A549 (cell line): ENCODE measurements at regions of chr14 and their contacts with region 1.

Region 1: GRCh38 chr14:94689218-94689984 is 77.2 kb downstream of the SERPINA3 start:
- DNase-seq: peak; percentile 38 to 70
- ATAC-seq: peak; percentile 92 to 99
- H3K4me3 ChIP-seq: peak overlapping the region; percentile 28; the same call in 1 of the 3 replicates
- H3K27ac ChIP-seq: peak overlapping the region; percentile 62 to 72; a peak in 5 of 6 replicates
- H3K4me1 ChIP-seq: 0 out of 3 replicates have a peak, but pooled peaks cover 3% of the 10 kb centered on the region
- CTCF ChIP-seq: peak; percentile 96
- EP300 ChIP-seq: no peak
- POLR2A ChIP-seq: no peak
- RAD21 ChIP-seq: peak; percentile 85 to 96

Region 2: GRCh38 chr14:93799989-93800921 is 889.1 kb before region 1 on chr14:
- CTCF ChIA-PET with region 1: no interaction called
- POLR2A ChIA-PET with region 1: no interaction called
- DNase-seq: no peak
- ATAC-seq: peak; percentile 47 to 60; a peak in 1 of 6 replicates
- H3K4me3 ChIP-seq: no peak overlapping the region
- H3K27ac ChIP-seq: no peak overlapping the region
- H3K4me1 ChIP-seq: no peaks in the 10 kb centered on the region
- CTCF ChIP-seq: no peak
- EP300 ChIP-seq: no peak
- POLR2A ChIP-seq: no peak
- RAD21 ChIP-seq: no peak

Region 3: GRCh38 chr14:94598814-94599652 is 90.4 kb before region 1 on chr14:
- CTCF ChIA-PET with region 1: interaction called, 14 read pairs
- POLR2A ChIA-PET with region 1: interaction called, 3 read pairs
- DNase-seq: peak; percentile 87 to 98
- ATAC-seq: peak; percentile 78 to 88
- H3K4me3 ChIP-seq: 0 out of 3 replicates have a peak overlapping the region, but pooled peaks have one; percentile 7
- H3K27ac ChIP-seq: peak overlapping the region; percentile 97 to 98
- H3K4me1 ChIP-seq: peaks cover 74% of the 10 kb centered on the region
- CTCF ChIP-seq: peak; percentile 23; the same call in 2 of the 3 replicates
- EP300 ChIP-seq: peak; percentile 86 to 93
- POLR2A ChIP-seq: no peak
- RAD21 ChIP-seq: peak; percentile 28 to 50; a peak in 4 of 5 replicates

Region 4: GRCh38 chr14:94748667-94749347 is 59.4 kb after region 1 on chr14:
- CTCF ChIA-PET with region 1: interaction called, 22 read pairs
- POLR2A ChIA-PET with region 1: no interaction called
- DNase-seq: peak; percentile 60 to 62
- ATAC-seq: peak; percentile 92 to 96
- H3K4me3 ChIP-seq: no peak overlapping the region
- H3K27ac ChIP-seq: no peak overlapping the region
- H3K4me1 ChIP-seq: no peaks in the 10 kb centered on the region
- CTCF ChIP-seq: peak; percentile 71
- EP300 ChIP-seq: no peak
- POLR2A ChIP-seq: no peak
- RAD21 ChIP-seq: peak; percentile 60 to 66

Region 5: DNA sequence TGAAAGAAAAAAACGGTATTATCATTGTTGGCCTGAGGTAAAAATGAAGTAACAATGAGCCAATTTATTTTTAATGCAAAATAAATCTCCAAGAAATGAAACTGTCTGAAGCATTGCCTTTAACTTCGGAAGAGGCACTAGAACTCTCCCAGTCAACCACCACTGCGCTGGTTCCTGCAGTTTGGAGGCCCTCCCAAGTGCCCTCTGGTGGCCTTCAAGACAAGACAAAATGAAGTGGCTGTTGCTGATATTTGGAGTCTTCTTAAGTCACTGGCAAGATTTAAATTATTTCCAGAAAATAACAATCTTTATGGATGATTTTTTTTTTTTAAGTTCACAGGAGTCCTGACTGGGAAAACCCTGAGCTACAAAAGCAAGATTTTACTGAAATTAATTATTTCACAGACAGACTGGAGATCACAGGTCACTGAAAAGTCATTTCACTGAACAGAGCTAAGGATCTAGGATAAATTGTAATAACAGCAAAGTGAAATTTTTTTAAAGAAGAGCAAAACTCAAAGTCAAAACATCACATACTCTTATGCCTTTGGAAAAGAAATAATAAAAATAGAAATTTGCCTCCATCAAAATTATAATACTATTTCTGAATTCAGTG is 409.7 kb after region 1 on chr14:
- CTCF ChIA-PET with region 1: interaction called, 18 read pairs
- POLR2A ChIA-PET with region 1: no interaction called
- DNase-seq: peak; percentile 39 to 82
- ATAC-seq: peak; percentile 93 to 96
- H3K4me3 ChIP-seq: no peak overlapping the region
- H3K27ac ChIP-seq: no peak overlapping the region
- H3K4me1 ChIP-seq: peaks cover 8% of the 10 kb centered on the region; the same call in 1 of the 3 replicates
- CTCF ChIP-seq: peak; percentile 80
- EP300 ChIP-seq: no peak
- POLR2A ChIP-seq: no peak
- RAD21 ChIP-seq: peak; percentile 68 to 73